ENCODE measurements at regions of chr18 and their contacts with region 1.

Region 1: GRCh38 chr18:34867520-34867919 is 157.4 kb downstream of the DTNA start:
- DNase-seq: peak; percentile 61
- ATAC-seq: peak; percentile 98
- H3K4me3 Mint-ChIP-seq: no peak overlapping the region
- H3K27ac Mint-ChIP-seq: no peak overlapping the region
- H3K4me1 Mint-ChIP-seq: peaks cover 2% of the 10 kb centered on the region
- H3K27me3 Mint-ChIP-seq: no peaks in the 10 kb centered on the region; the same call in 1 of the 2 replicates
- CTCF ChIP-seq: 0 out of 2 replicates have a peak, but pooled peaks have one; percentile 21

Region 2: GRCh38 chr18:34880882-34881834 is 13.6 kb after region 1 on chr18:
- CTCF ChIA-PET with region 1: interaction called, 10 read pairs
- POLR2A ChIA-PET with region 1: no interaction called
- DNase-seq: no peak
- ATAC-seq: no peak
- H3K4me3 Mint-ChIP-seq: no peak overlapping the region
- H3K27ac Mint-ChIP-seq: no peak overlapping the region
- H3K4me1 Mint-ChIP-seq: no peaks in the 10 kb centered on the region
- H3K27me3 Mint-ChIP-seq: no peaks in the 10 kb centered on the region
- CTCF ChIP-seq: no peak

Region 3: DNA sequence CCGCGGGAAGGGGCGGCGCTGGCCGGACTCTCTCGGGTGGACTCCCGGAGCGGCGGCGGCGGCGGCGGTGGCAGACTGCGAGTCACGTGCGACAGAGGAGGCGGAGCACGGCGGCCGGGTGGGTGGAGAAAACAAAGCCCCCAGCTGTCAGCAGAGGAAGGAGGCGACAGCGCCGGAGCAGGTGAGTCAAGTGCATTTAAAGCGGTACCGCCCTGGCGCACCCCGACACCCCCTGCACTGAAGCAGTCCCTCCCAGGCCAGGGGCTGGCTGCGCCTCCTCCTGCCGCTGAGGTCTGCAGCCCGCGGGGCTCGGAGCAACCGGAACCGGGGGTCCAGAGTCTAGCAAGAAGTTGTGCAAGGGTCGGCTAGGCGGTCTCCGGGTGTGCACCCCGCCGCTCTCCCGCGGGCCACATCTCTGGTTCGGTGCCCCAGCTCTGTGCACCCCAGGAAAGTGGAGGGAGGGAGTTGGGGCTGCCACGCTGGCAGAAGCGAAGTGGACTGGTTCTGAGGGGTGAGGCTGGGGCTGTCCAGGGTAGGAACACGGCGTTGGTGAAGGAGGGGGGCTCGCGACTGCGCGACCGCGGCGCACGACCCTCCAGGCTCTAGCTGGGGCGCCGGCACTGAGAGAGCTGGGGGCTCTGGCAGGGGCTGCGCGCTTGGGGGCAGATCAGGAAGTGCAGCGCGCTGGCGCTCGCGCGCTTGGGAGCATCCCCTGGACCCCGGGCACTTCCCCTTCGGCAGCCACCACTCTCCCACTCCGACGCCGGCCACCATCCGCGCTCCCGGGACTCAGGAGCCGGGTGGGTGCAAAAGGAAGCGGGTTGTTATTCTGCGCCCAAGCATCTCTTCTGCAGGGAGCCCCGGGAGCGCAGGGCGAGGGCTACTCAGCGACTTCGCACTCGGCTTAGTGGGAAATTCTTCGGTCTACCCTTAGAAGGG is 109.6 kb after region 1 on chr18:
- CTCF ChIA-PET with region 1: interaction called, 11 read pairs
- POLR2A ChIA-PET with region 1: no interaction called
- DNase-seq: peak; percentile 86
- ATAC-seq: peak; percentile 78
- H3K4me3 Mint-ChIP-seq: peak overlapping the region; percentile 82
- H3K27ac Mint-ChIP-seq: no peak overlapping the region
- H3K4me1 Mint-ChIP-seq: peaks cover 23% of the 10 kb centered on the region
- H3K27me3 Mint-ChIP-seq: peaks cover 96% of the 10 kb centered on the region
- CTCF ChIP-seq: no peak